CD4-positive, alpha-beta memory T cell (primary cell): ENCODE measurements at regions of chr2 and their contacts with region 1.

Region 1: GRCh38 chr2:171703574-171704347 is 16.5 kb downstream of the DYNC1I2 start:
- DNase-seq: peak in 4 of 5 donors; percentile 19 to 33 (median 20)
- H3K4me3 ChIP-seq: no peak overlapping the region
- H3K4me3 Mint-ChIP-seq: no peak overlapping the region
- H3K27ac ChIP-seq: no peak overlapping the region
- H3K27ac Mint-ChIP-seq: peak overlapping the region in 6 of 7 donors; percentile 27 to 86 (median 75)
- H3K4me1 ChIP-seq: no peaks in the 10 kb centered on the region
- H3K4me1 Mint-ChIP-seq: peaks cover 6 to 12% (median 8%) of the 10 kb centered on the region in 4 donors
- H3K27me3 ChIP-seq: no peaks in the 10 kb centered on the region
- H3K27me3 Mint-ChIP-seq: no peaks in the 10 kb centered on the region

Region 2: GRCh38 chr2:171723724-171724683 is 20.2 kb after region 1 on chr2:
- CTCF ChIA-PET with region 1: interaction called, 10 read pairs
- POLR2A ChIA-PET with region 1: no interaction called
- intact Hi-C with region 1: no loop called
- DNase-seq: no peak
- H3K4me3 ChIP-seq: no peak overlapping the region
- H3K4me3 Mint-ChIP-seq: no peak overlapping the region
- H3K27ac ChIP-seq: no peak overlapping the region
- H3K27ac Mint-ChIP-seq: no peak overlapping the region
- H3K4me1 ChIP-seq: no peaks in the 10 kb centered on the region
- H3K4me1 Mint-ChIP-seq: no peaks in the 10 kb centered on the region
- H3K27me3 ChIP-seq: no peaks in the 10 kb centered on the region
- H3K27me3 Mint-ChIP-seq: no peaks in the 10 kb centered on the region

Region 3: DNA sequence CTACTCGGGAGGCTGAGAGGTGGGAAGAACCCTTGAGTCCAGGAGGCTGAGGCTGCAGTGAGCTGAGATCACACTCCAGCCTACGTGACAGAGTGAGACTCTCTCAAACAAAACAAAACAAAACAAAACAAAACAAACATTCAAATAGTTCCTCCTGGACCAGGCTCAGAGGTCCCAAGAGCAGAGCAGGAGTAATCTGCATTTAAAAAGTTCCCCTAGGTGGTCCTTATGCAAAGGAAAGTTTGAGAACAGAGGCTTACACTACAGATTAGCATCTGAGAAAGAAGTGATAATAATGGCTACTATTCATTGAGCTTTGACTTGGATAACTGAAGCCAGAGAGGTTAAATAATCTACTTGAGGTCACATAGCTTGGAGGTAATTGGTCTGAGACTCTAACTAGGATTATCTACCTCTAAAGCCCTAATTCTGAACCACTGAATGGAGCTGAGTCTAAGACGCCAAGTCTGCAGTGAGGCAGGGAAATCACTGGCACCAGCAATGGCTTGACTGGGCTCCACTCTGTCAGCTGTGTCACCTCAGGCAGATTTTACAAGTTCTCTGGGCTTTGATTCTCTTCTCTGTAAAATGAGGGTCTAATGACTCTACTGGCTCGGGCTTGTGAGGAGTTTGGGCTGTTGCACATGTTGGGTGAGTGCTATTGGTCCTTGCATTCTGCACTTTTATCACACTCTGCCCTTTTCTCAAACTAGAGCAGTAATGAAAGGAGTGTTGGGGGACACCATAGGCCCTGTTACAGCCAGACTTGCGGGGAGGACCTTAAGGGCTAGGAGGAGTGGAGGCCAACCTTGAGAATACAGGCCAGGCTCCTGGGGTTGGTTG is 428.2 kb after region 1 on chr2:
- CTCF ChIA-PET with region 1: interaction called, 10 read pairs
- POLR2A ChIA-PET with region 1: interaction called, 3 read pairs
- intact Hi-C with region 1: loop called (anchors 1 kb)
- DNase-seq: no peak
- H3K4me3 ChIP-seq: no peak overlapping the region
- H3K4me3 Mint-ChIP-seq: no peak overlapping the region
- H3K27ac ChIP-seq: no peak overlapping the region
- H3K27ac Mint-ChIP-seq: no peak overlapping the region
- H3K4me1 ChIP-seq: no peaks in the 10 kb centered on the region
- H3K4me1 Mint-ChIP-seq: no peaks in the 10 kb centered on the region
- H3K27me3 ChIP-seq: no peaks in the 10 kb centered on the region
- H3K27me3 Mint-ChIP-seq: peaks cover 4 to 12% of the 10 kb centered on the region in 2 donors

Region 4: GRCh38 chr2:172484253-172484652 is 780.5 kb after region 1 on chr2:
- CTCF ChIA-PET with region 1: interaction called, 4 read pairs
- POLR2A ChIA-PET with region 1: no interaction called
- intact Hi-C with region 1: loop called (anchors 5 kb)
- DNase-seq: peak in 4 of 5 donors; percentile 25 to 34 (median 32)
- H3K4me3 ChIP-seq: no peak overlapping the region
- H3K4me3 Mint-ChIP-seq: no peak overlapping the region
- H3K27ac ChIP-seq: no peak overlapping the region
- H3K27ac Mint-ChIP-seq: peak overlapping the region in 5 of 7 donors; percentile 23 to 76 (median 66)
- H3K4me1 ChIP-seq: peaks cover 6% of the 10 kb centered on the region
- H3K4me1 Mint-ChIP-seq: peaks cover 26 to 51% (median 34%) of the 10 kb centered on the region in 4 donors
- H3K27me3 ChIP-seq: no peaks in the 10 kb centered on the region
- H3K27me3 Mint-ChIP-seq: no peaks in the 10 kb centered on the region

Region 5: GRCh38 chr2:172710584-172711024 is 1006.8 kb after region 1 on chr2:
- CTCF ChIA-PET with region 1: no interaction called
- POLR2A ChIA-PET with region 1: no interaction called
- intact Hi-C with region 1: loop called (anchors 2 kb)
- DNase-seq: peak in 4 of 5 donors; percentile 11 to 31 (median 22)
- H3K4me3 ChIP-seq: no peak overlapping the region
- H3K4me3 Mint-ChIP-seq: no peak overlapping the region
- H3K27ac ChIP-seq: no peak overlapping the region
- H3K27ac Mint-ChIP-seq: no peak overlapping the region
- H3K4me1 ChIP-seq: no peaks in the 10 kb centered on the region
- H3K4me1 Mint-ChIP-seq: no peaks in the 10 kb centered on the region
- H3K27me3 ChIP-seq: no peaks in the 10 kb centered on the region
- H3K27me3 Mint-ChIP-seq: peaks cover 11 to 19% of the 10 kb centered on the region in 2 donors